Upper lobe of right lung (tissue), 1 donor: ENCODE measurements at regions of chr11 and their contacts with region 1.

Region 1: DNA sequence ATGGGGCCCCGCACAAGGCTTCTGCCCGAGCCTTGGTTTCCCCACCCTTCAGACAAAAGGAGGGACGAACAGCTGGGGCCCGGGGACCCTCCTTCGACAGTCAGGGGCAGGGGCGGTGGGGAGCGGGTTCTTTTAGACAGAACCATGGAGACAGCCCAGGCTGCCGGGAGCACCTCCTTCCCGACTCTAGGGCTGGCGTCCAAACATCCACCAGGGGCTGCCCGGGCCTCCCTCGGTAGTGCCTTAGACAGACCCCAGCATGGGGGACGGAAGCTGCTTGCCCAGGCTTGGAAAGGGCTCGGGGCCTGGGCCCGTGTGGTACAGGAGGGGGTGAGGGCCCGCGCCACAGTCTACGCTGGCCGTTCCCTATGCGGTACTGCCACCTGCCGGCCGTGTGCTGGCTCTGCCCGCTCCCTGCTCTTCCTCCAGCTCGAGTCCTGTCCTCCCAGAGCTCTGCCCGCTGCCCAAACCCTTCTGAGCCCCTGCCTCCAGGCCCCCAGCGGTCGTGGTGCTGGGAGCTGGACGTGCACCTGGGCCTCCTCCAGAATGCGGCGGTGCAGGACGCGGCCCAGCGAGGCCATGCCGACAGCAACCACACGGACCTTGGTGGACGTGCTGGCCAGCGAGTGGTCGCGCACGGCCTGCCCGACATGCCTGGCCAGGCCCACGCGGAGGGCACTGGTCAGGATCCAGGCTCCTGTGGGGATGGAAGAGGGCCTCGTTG is 20.1 kb downstream of the TSSC4 start:
- DNase-seq: peak; percentile 88
- ATAC-seq: peak; percentile 93
- H3K4me3 ChIP-seq: no peak overlapping the region
- H3K27ac ChIP-seq: no peak overlapping the region
- H3K4me1 ChIP-seq: peaks cover 8% of the 10 kb centered on the region
- H3K27me3 ChIP-seq: no peaks in the 10 kb centered on the region
- CTCF ChIP-seq: peak; percentile 95

Region 2: DNA sequence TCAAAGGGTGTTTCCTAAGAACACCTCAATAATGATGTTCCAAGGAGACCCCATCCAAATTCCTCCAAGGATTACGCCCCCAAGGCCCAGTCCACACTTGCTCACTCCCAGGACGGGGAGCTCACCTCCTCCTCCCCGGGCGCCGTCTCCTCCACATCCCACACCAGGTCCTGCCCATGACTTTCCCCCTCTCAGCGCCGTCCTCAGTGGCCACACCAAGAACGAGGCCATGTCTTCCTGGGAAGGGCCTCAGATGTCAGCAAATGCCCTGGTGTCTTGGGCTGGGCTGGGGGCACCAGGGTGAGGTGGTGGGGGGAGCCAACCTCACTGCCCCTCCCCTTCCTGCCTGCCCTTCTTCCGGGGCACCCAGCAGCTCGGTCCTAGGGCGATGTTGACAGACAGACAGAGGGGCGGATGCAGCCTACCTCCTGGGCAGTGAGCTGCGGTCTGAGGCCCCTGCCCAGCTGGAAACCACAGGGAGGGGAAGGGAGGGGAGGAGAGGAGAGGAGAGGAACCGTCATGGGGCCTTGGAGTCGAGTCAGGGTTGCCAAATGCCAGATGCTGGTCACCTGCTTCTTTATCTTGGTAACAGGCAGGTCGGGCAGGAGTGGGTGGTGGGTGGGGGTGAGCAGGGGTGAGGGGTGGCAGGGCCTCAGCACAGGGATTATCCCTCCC is 118.9 kb before region 1 on chr11 and contains the starts of genes C11orf21 and TSPAN32:
- intact Hi-C with region 1: loop called (anchors 5 kb)
- DNase-seq: peak; percentile 81
- ATAC-seq: peak; percentile 69
- H3K4me3 ChIP-seq: peak within 1 kb of the TSS; percentile 31
- H3K27ac ChIP-seq: peak within 1 kb of the TSS; percentile 66
- H3K4me1 ChIP-seq: peaks cover 31% of the 10 kb centered on the region
- H3K27me3 ChIP-seq: no peaks in the 10 kb centered on the region
- CTCF ChIP-seq: no peak
- total RNA-seq, gene C11orf21: 6.5 TPM
- total RNA-seq, gene TSPAN32: 12.2 TPM

Region 3: GRCh38 chr11:2480874-2481220 is 60.2 kb after region 1 on chr11:
- intact Hi-C with region 1: no loop called
- DNase-seq: peak; percentile 66
- ATAC-seq: peak; percentile 96
- H3K4me3 ChIP-seq: no peak overlapping the region
- H3K27ac ChIP-seq: peak overlapping the region; percentile 17
- H3K4me1 ChIP-seq: peaks cover 7% of the 10 kb centered on the region
- H3K27me3 ChIP-seq: no peaks in the 10 kb centered on the region
- CTCF ChIP-seq: no peak